ENCODE measurements at regions of chr10 and their contacts with region 1.

Region 1: DNA sequence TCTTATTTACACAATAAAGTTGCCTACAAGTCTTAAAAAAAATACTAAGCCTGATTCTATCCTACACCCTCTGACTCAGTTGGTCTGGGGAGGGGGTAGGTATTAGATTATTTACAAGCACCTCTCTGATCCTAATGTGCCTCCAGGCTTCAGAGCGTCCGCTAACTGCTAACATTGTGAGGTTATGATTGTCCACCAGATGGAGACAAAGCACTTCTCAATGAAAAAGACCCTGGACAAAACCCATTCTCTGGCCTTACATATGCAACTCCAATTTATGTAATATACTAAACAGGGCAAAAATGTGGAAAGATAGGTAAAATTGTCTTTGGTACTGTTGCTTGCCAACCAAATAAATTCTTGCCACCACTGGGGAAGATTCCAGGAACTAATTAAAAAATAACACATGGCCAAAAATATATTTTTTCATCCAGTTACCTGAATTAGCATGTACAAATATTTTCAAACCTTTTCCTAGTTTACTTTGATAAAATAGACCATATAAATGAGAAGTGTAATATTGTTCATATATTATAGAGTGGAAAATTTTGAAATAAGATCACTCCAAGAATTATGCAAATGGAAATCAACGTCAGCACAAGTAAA is 92.4 kb downstream of the KIF20B start:
- DNase-seq: no peak
- ATAC-seq: peak; percentile 80 to 85
- H3K4me3 ChIP-seq: no peak overlapping the region
- H3K27ac ChIP-seq: no peak overlapping the region
- H3K4me1 ChIP-seq: no peaks in the 10 kb centered on the region
- H3K27me3 ChIP-seq: no peaks in the 10 kb centered on the region
- CTCF ChIP-seq: peak; percentile 85

Region 2: DNA sequence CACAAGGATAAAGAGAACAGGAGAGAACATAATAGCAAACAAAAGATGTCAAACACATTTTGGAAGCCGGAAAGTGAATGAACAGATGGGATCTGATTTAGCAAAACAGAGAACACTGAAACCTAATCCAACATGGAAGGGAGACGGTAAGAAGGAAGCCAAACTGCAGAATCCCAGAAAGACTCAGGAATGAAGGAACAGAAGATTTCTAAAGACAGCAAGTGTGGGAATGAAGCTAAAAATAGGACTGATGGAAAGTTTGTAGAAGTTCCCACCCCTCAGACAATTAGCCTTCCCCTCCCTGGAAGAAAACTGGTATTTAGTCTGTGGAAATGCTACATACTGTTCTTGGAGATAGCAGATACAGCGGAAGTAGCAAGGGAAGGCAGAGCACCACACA is 299.2 kb before region 1 on chr10:
- intact Hi-C with region 1: no loop called
- DNase-seq: no peak
- ATAC-seq: no peak
- H3K4me3 ChIP-seq: no peak overlapping the region
- H3K27ac ChIP-seq: no peak overlapping the region
- H3K4me1 ChIP-seq: no peaks in the 10 kb centered on the region
- H3K27me3 ChIP-seq: no peaks in the 10 kb centered on the region
- CTCF ChIP-seq: no peak

Region 3: DNA sequence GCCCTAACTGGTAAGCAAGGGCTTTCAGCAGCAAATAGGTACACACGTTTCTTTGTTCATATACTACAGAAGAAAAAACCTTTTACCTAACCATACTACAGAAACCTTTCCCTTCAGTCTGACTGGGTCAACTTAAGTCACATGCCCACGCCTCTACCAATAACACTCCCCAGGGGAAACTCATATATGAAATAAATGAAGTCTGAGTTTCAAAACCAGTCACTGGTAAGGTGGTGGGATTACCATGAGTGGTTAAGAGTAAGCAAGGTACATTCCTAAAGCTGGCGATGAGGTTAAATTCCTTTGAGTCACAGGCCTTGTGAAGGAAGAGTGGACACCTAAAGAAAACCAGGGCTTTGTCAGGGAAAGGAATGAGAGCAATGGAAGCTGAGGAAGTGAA is 113.8 kb before region 1 on chr10:
- intact Hi-C with region 1: no loop called
- DNase-seq: no peak
- ATAC-seq: no peak
- H3K4me3 ChIP-seq: no peak overlapping the region
- H3K27ac ChIP-seq: no peak overlapping the region
- H3K4me1 ChIP-seq: no peaks in the 10 kb centered on the region
- H3K27me3 ChIP-seq: no peaks in the 10 kb centered on the region
- CTCF ChIP-seq: no peak

Region 4: DNA sequence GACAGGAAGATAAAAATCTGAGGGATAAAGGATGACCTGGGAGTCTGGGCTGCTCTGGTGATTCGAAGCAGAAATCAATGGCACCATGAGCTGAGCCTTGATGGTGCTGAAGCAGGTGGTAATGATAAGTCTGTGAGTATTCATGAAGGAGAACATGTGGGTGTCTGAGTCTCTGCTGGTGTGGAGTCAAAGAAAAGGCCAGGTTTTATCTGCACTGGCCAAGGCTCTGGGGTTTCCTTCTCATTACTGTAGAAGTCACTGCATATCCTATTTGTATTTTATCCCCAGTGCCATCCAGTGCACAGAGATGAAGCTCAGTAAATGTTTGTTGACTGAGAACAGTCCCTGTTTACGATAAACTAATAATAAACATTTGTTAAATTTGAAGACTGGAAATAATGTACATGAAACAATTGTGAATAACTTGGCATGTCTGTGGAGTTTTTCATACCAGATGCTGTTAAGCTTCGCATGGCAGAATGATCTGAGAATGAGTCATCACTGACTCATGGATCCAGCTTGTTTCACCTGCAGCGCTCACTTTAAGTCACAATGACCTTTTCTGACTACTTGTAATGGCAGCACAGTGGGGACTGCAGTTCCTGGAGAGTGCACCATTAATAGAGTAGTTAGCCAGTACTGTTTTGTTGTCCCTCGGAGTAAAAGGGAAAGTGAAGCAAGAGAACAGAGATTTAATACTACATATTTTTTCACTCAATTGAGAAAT is 525.6 kb after region 1 on chr10:
- intact Hi-C with region 1: no loop called
- DNase-seq: no peak
- ATAC-seq: no peak
- H3K4me3 ChIP-seq: no peak overlapping the region
- H3K27ac ChIP-seq: no peak overlapping the region
- H3K4me1 ChIP-seq: no peaks in the 10 kb centered on the region
- H3K27me3 ChIP-seq: no peaks in the 10 kb centered on the region
- CTCF ChIP-seq: no peak

Region 5: DNA sequence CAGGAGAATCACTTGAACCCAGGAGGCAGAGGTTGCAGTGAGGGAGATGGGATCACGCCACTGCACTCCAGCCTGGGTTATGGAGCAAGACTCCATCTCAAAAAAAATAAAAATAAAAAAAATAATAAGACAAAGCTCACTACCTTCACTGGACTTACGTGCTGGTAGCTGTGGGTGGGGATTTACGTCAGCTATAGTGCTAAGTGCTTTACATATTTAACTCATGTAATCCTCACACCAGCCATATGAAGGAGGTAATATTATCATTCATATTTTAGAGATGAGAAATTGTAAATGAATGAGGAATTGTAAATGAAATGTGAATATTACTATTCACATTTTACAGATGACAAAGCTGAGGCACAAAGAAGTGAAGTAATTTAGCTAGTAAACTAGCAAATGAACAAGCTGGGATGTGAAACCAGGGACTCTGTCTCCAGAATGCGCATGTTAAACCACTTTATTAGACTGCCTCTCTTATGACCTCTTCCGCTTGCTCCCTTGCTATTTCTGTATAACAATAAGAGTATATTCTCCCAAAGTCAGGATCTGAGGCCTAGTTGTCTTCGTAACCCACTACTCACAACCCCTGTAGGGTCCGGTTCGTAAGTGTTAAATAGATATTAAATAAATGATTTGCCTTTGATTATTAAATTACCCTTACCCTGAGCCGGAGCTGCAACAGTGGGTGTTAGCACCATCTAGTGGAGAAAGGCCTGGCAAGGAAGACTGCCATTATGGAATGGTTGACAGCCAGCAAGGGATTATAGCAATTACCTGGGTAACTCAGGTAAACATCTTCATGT is 993.8 kb after region 1 on chr10:
- intact Hi-C with region 1: loop called (anchors 5 kb)
- DNase-seq: no peak
- ATAC-seq: peak; percentile 65
- H3K4me3 ChIP-seq: no peak overlapping the region
- H3K27ac ChIP-seq: no peak overlapping the region
- H3K4me1 ChIP-seq: no peaks in the 10 kb centered on the region
- H3K27me3 ChIP-seq: no peaks in the 10 kb centered on the region
- CTCF ChIP-seq: peak; percentile 78